Activated naive CD4-positive, alpha-beta T cell treated with anti-CD3 and anti-CD28 coated beads for 36 hours (primary cell): ENCODE measurements at regions of chr1 and their contacts with region 1.

Region 1: GRCh38 chr1:86714159-86714558 is 9.8 kb downstream of the SH3GLB1 start:
- DNase-seq: no peak
- H3K4me3 Mint-ChIP-seq: no peak overlapping the region
- H3K27ac Mint-ChIP-seq: no peak overlapping the region
- H3K4me1 Mint-ChIP-seq: peaks cover 32% of the 10 kb centered on the region
- H3K27me3 Mint-ChIP-seq: no peaks in the 10 kb centered on the region

Region 2: DNA sequence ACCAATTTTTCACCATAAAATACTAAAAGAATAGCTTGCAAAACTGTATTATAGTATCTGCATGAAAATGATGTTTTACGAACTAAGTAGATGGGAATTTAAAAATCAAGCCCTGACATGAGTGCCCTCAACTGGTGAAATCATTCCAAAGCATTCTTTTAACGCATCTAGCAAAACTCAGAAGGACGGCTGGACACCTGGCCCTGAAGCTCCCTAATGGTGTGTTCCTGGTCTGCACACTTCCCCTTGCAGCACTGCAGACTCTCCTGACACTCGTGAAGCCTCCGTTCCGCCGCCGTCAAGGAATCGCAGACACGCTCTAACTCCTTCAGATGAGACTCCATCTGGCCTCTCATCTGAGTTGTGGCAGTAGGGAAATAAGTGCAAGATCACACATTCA is 357.9 kb before region 1 on chr1:
- CTCF ChIA-PET with region 1: no interaction called
- intact Hi-C with region 1: no loop called
- DNase-seq: no peak
- H3K4me3 Mint-ChIP-seq: no peak overlapping the region
- H3K27ac Mint-ChIP-seq: no peak overlapping the region
- H3K4me1 Mint-ChIP-seq: no peaks in the 10 kb centered on the region
- H3K27me3 Mint-ChIP-seq: no peaks in the 10 kb centered on the region

Region 3: GRCh38 chr1:86741947-86742572 is 27.9 kb after region 1 on chr1:
- CTCF ChIA-PET with region 1: no interaction called
- intact Hi-C with region 1: no loop called
- DNase-seq: peak; percentile 55
- H3K4me3 Mint-ChIP-seq: no peak overlapping the region
- H3K27ac Mint-ChIP-seq: no peak overlapping the region
- H3K4me1 Mint-ChIP-seq: no peaks in the 10 kb centered on the region
- H3K27me3 Mint-ChIP-seq: no peaks in the 10 kb centered on the region

Region 4: DNA sequence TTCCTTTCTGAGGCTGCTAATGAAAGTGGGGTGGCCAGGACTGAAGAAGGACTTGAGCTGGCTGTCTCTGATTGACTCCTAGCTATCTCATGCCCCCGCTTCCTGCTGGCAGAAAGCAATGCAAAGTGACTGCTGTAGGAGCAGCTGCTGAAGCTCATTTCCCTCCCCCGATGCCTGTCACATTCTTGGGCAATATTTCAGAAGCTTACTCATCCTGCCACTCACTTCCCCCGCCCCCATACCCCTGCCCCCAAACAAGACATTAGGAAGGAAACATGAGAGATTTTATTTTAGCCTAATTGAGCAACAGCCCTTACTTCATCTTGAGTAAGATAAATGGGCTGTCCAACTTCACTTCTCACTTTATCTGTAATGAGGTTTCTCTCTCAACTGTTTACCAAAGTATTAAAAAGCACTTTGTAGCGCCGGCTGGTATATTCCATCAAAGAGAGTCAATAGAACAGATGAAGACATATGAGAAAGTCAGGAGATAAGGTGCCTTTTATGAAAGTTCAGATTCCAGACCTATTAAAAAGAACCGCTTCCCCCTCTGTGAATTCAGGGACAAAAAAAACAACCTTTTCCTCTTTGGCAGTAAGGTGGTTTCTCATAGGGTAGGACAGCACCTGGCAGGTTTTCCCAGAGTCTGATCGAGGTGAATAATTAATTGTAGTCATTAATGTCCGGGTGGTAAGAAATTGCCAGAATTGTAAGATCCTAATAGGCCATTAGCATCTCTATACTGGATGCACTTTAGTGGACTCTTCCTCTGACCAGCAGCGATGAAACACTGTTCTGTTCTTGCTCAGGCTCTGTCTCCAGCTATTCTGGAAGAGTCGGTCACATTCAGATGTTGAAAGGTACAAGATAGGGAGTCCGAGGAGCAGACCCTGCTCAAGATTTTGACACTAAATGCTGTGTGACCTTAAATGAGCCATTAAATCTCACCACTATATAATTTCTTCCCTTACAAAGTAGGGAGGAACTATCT is 60.4 kb after region 1 on chr1:
- CTCF ChIA-PET with region 1: no interaction called
- intact Hi-C with region 1: loop called (anchors 2 kb)
- DNase-seq: peak; percentile 81
- H3K4me3 Mint-ChIP-seq: no peak overlapping the region
- H3K27ac Mint-ChIP-seq: peak overlapping the region; percentile 17
- H3K4me1 Mint-ChIP-seq: peaks cover 15% of the 10 kb centered on the region
- H3K27me3 Mint-ChIP-seq: no peaks in the 10 kb centered on the region

Region 5: GRCh38 chr1:86811142-86811924 is 97.2 kb after region 1 on chr1:
- CTCF ChIA-PET with region 1: no interaction called
- intact Hi-C with region 1: no loop called
- DNase-seq: no peak
- H3K4me3 Mint-ChIP-seq: no peak overlapping the region
- H3K27ac Mint-ChIP-seq: no peak overlapping the region
- H3K4me1 Mint-ChIP-seq: no peaks in the 10 kb centered on the region
- H3K27me3 Mint-ChIP-seq: no peaks in the 10 kb centered on the region